ENCODE measurements at regions of chr16 and their contacts with region 1.

Region 1: DNA sequence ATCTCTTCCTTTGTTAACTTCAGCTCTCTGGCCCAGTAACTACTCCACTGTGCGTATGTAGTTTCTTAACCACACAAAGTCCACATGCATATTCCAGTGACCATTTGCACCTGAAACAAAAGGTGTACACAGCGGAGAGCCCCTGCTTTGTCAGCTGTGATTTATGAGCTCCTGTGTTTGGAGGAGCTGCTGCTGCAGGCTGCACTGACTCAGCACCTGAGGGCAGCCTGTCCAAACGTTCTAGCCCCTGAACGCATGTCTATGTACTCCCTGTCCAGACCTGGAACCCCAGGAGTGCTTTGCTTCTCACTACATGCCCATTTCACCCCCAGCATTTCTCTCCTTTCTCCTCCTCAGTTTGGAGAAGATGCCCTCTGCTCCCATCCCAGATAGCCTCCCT is 216.1 kb downstream of the ABCC12 start:
- DNase-seq: peak; percentile 35 to 45
- H3K4me3 ChIP-seq: no peak overlapping the region
- H3K4me3 Mint-ChIP-seq: no peak overlapping the region
- H3K27ac Mint-ChIP-seq: peak overlapping the region; percentile 62
- H3K4me1 ChIP-seq: no peaks in the 10 kb centered on the region
- H3K4me1 Mint-ChIP-seq: peaks cover 8% of the 10 kb centered on the region
- H3K27me3 ChIP-seq: no peaks in the 10 kb centered on the region
- H3K27me3 Mint-ChIP-seq: peaks cover 3% of the 10 kb centered on the region
- CTCF ChIP-seq: no peak

Region 2: DNA sequence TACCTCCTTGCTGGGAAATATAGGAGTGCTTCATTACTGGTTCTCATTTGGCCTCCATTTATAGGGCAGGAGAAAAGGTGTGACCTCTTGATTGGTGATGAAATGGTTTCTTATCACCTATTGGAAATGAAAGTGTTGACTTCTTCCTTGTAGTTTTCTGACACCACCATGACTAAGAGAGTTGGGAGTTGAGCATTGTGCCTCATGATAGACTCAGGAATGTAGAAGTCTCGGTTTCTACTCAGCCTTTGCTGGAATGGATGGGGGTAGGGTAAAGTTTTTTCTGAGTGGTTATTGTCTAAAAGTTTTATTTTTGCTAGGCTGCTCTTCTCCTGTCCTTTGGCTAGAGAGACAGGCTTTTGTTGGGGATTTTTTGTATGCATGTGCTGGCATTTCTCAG is 361.1 kb before region 1 on chr16:
- CTCF ChIA-PET with region 1: no interaction called
- POLR2A ChIA-PET with region 1: no interaction called
- intact Hi-C with region 1: no loop called
- DNase-seq: no peak
- H3K4me3 ChIP-seq: no peak overlapping the region
- H3K4me3 Mint-ChIP-seq: no peak overlapping the region
- H3K27ac Mint-ChIP-seq: no peak overlapping the region
- H3K4me1 ChIP-seq: no peaks in the 10 kb centered on the region
- H3K4me1 Mint-ChIP-seq: no peaks in the 10 kb centered on the region
- H3K27me3 ChIP-seq: no peaks in the 10 kb centered on the region
- H3K27me3 Mint-ChIP-seq: no peaks in the 10 kb centered on the region
- CTCF ChIP-seq: no peak

Region 3: GRCh38 chr16:47664653-47665325 is 274.9 kb before region 1 on chr16:
- CTCF ChIA-PET with region 1: no interaction called
- POLR2A ChIA-PET with region 1: no interaction called
- intact Hi-C with region 1: no loop called
- DNase-seq: peak; percentile 11 to 32
- H3K4me3 ChIP-seq: no peak overlapping the region
- H3K4me3 Mint-ChIP-seq: no peak overlapping the region
- H3K27ac Mint-ChIP-seq: no peak overlapping the region
- H3K4me1 ChIP-seq: no peaks in the 10 kb centered on the region
- H3K4me1 Mint-ChIP-seq: no peaks in the 10 kb centered on the region
- H3K27me3 ChIP-seq: no peaks in the 10 kb centered on the region
- H3K27me3 Mint-ChIP-seq: no peaks in the 10 kb centered on the region
- CTCF ChIP-seq: no peak

Region 4: DNA sequence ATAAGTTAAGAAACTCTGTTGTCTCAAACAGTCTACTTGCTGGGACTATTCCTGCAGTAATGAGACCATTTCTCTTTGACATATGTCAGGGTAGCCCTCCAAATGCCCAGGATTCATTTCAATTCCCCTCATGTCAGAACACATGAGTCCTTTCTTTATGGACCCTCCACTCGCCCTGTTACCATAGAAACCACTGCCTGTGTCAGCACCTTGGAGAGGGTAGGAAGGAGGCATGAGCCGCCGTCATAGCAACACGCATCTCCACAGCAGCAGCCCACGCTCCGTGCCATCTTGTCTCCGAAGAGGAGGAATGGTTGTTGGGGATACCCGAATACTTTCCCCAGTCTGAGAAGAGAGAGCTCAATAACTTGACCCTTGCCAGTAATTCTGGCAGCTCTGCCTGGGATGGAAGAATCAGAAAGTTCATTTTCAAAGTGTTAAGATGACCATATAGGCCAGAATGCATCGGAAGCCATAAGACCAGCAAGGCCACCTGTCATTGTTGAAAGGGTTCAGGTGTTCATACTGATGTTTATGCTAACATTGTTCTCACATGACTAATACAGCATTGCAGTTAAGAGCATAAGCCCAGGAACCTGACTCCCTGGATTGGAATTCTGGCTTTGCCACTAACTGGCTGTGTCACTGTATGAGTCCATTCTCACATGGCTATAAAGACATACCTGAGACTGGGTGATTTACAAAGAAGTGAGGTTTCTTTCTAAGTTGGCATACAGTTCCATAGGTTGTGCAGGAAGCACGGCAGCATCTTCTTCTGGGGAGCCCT is 74.9 kb after region 1 on chr16:
- CTCF ChIA-PET with region 1: no interaction called
- POLR2A ChIA-PET with region 1: no interaction called
- intact Hi-C with region 1: no loop called
- DNase-seq: no peak
- H3K4me3 ChIP-seq: no peak overlapping the region
- H3K4me3 Mint-ChIP-seq: no peak overlapping the region
- H3K27ac Mint-ChIP-seq: peak overlapping the region; percentile 9
- H3K4me1 ChIP-seq: no peaks in the 10 kb centered on the region
- H3K4me1 Mint-ChIP-seq: no peaks in the 10 kb centered on the region
- H3K27me3 ChIP-seq: no peaks in the 10 kb centered on the region
- H3K27me3 Mint-ChIP-seq: no peaks in the 10 kb centered on the region
- CTCF ChIP-seq: no peak

Region 5: GRCh38 chr16:48041861-48042480 is 102.3 kb after region 1 on chr16:
- CTCF ChIA-PET with region 1: no interaction called
- POLR2A ChIA-PET with region 1: no interaction called
- intact Hi-C with region 1: loop called (anchors 5 kb)
- DNase-seq: peak; percentile 44 to 51
- H3K4me3 ChIP-seq: no peak overlapping the region
- H3K4me3 Mint-ChIP-seq: no peak overlapping the region
- H3K27ac Mint-ChIP-seq: no peak overlapping the region
- H3K4me1 ChIP-seq: no peaks in the 10 kb centered on the region
- H3K4me1 Mint-ChIP-seq: no peaks in the 10 kb centered on the region
- H3K27me3 ChIP-seq: no peaks in the 10 kb centered on the region
- H3K27me3 Mint-ChIP-seq: peaks cover 10% of the 10 kb centered on the region
- CTCF ChIP-seq: peak; percentile 53 to 62